ENCODE measurements at regions of chr6 and their contacts with region 1.

Region 1: DNA sequence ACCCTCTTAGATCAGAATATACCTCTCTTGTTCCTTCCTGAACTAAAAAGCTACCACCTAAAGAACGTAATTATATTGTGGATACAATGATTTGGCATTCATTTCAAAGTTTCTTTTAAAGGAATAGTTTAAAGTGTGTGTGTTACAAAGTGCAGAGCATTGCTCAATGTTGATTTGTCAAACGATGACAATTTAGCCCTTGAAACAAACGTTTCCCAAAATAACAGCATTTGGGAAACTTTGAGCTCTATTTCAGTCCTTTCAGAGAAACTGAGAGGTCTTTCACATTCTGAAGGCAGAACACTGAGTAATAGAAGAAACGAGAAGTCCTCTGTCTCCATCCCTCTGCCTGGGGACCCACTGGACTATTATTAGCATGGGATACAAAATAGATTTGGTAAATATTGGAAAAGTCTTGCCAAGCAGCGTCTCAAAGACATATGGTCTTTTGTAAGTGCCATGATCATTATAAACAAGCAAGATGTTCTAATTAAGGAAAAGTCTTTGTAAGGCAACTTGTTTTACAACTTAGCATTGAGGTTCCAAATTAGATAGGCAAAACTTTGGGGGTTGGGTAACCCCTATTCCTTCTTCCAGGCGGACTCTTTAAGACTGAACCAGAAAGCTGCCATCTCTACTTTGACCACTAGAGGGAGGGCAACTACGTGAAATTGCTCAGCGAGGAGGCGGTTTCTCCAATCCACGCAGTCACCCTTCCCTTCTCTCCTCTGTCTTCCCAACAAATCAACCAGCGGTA is 208.8 kb downstream of the RNF144B start:
- DNase-seq: peak; percentile 54
- H3K4me3 ChIP-seq: no peak overlapping the region
- CTCF ChIP-seq: peak; percentile 96

Region 2: GRCh38 chr6:18477301-18477941 is 118.5 kb before region 1 on chr6:
- in situ Hi-C with region 1: no loop called
- DNase-seq: no peak
- H3K4me3 ChIP-seq: no peak overlapping the region
- CTCF ChIP-seq: no peak

Region 3: DNA sequence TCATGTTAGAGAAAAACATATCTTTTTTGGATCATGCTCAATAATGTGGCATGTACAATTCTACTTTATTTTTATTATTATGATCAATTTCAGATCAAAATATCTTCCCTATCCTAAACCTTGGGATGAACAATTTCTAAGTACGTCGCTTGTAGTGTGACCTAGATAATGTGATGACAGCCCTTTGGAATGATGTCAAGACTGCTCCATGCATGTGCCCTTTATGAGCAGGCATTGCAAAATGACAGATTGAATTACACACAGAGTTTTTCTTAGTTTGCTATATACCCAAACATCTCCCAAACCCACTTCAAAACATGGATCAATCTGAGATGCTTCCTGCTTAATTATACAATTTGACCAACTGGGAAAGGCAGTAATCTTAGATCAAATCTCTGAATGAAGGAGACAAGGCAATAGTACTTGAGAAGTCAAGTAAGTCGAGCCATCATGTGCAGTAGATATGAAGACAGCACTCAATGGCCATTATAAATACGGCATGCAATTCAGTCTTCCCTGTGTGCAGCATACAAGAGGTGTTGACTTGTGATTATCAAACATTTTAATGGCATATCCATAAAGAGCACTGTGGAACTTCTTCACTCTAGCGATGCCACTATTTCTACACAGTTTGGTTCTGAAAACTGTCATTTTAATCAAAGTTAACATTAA is 86.0 kb after region 1 on chr6:
- in situ Hi-C with region 1: no loop called
- DNase-seq: no peak
- H3K4me3 ChIP-seq: no peak overlapping the region
- CTCF ChIP-seq: no peak

Region 4: DNA sequence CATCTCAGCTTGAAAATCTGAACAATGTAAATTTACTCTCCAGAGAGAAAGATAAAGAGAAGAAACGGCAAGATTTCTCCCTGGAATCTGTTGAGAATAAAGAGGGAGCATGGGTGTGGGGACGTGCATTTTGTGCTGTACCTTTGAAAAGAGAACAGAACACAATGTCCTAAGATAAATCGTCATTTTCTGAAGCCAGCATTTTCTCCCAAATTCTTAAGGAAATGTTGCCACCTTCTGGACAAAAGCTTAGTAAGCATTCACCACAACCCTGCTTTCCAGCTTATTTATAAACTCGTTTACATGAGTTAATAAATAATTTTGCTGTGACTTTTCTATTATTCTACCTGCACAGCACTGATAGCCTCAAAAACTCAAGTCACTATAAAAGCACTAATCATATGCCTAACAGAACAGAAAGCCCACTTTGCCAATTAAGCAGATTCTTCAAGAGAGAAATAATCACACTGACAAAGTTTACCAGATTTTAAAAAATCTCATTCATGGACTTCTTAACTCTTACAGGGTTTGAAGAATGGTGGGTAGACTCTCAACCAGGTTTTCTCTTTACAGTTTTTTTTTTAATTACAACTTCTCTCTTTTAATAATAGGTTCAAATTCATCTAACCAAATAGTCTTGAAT is 1460.5 kb after region 1 on chr6:
- in situ Hi-C with region 1: loop called (anchors 25 kb)
- DNase-seq: peak; percentile 55
- H3K4me3 ChIP-seq: no peak overlapping the region
- CTCF ChIP-seq: peak; percentile 57

Measured in astrocyte of the cerebellum (primary cell).